GM18951 (cell line): ENCODE measurements at regions of chr2 and their contacts with region 1.

Region 1: DNA sequence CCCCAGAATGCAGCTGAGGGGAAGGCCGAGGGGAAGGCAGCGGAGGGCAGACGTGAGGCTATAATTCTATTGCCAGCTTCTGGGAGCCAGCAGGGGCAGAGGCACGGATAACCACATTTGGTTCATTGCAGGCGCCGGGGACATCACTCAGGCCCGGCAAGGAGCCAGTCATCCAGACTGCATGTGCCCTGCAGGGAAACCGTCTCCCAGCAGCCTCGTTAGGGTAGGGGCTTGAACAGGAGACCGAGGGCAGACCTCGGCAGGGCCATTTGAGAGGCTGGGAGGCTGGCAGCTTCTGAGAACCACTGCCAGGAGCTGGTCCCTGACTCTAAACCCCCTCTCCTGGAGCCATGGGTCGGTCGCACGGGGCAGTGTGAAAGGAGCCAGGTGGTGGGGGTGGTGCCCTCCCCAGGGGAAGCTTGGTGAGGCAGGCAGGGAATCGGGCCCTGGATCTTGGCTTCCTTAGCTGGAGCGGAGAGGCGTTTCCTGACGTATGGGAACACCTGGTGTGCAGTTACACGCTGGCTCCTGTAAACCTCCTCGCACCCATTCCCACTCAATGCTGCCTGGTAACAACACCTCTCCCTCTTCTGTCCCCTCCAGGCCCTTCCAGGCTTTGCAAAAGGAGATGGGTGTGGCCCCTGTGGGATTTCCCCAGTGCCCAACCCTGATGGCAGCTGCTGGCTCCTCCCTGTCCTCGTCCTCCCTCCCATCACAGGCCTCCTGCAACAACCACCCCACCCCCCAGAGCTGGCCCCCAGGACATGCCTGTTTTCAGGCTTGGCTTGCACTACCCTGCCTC is 24.6 kb downstream of the ADRA2B start:
- POLR2A ChIP-seq: no peak

Region 2: DNA sequence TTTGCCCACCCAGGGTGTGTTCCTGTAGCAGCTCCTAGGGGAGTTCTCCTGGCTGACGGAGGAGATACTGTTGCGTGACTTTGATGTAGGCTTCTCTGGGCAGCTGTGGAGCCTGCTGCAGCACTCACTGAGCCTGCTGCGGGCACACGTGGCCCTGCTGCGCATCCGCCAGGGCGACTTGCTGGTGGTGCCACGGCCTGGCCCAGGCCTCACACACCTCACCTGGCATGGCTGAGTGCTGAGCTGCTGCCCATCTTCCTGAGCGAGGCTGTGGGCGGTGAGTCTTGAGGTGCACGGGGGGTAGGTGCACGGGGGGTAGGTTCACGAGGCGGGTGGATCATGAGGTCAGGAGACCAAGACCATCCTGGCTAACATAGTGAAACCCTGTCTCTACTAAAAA is 291.8 kb before region 1 on chr2:
- in situ Hi-C with region 1: loop called (anchors 25 kb)
- POLR2A ChIP-seq: no peak

Region 3: DNA sequence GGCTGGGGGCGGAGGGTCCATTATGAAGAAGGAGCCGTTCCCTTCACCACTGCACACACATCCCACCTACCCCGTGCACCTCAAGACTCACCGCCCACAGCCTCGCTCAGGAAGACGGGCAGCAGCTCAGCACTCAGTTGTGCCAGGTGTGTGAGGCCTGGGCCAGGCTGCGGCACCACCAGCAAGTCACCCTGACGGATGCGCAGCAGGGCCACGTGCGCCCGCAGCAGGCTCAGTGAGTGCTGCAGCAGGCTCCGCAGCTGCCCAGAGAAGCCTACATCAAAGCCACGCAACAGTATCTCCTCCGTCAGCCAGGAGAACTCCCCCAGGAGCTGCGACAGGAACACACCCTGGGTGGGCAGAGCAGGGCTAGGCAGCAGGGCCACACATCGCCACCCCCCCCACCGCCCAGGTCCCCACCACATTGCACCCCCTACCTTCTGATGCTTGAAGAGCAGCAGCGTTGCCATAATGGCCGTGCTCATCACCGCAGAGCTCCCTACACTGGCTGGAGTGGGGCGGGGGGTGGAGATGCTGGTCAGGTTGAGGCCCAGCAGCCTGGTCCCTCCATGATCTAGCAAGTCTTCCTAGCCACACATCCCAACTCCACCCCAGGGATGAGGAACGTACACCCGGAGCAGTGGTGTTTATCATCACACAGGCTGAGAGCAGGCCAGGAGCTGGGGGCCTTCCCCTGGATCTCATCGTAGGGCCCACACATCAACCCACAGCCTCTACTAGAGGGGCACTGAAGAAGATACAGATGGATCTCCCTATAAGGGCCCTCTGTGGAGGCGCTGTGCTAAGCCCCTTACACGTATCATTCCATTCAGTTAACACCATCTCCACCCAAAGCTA is 67.2 kb before region 1 on chr2:
- in situ Hi-C with region 1: loop called (anchors 10 kb)
- POLR2A ChIP-seq: no peak

Region 4: DNA sequence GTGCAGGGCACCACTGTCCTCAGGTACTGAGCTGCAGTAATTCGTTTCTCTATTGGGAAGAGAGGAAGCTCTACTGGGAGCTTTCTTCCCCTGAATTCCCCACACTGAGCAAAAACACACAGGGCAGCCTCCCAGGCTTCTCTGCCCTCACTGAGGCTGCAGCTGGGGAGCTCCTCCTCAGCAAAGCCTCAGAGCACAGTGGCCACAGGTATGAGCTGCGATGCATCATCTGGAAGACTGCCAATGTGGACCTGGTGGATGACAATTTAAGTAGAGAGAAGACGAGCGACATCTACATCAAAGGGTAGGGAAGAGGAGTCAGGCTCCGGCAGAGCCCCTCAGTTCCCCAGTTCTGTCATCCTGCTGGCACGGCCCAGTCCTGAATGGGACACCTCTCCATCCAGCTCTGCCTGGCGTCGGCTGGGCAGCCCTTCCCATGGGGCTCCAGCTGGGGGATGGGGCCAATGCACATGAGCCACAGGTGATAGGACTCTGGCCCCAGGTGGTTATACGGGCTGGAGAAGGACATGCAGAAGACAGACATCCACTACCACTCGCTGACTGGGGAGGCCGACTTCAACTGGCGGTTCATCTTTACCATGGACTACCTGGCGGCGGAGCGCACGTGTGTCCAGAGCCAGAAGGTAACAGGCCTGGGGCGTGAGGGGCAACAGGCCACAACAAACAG is 610.5 kb after region 1 on chr2:
- in situ Hi-C with region 1: no loop called
- POLR2A ChIP-seq: no peak